Right cardiac atrium (tissue), 5 donors: ENCODE measurements at regions of chr17 and their contacts with region 1.

Region 1: DNA sequence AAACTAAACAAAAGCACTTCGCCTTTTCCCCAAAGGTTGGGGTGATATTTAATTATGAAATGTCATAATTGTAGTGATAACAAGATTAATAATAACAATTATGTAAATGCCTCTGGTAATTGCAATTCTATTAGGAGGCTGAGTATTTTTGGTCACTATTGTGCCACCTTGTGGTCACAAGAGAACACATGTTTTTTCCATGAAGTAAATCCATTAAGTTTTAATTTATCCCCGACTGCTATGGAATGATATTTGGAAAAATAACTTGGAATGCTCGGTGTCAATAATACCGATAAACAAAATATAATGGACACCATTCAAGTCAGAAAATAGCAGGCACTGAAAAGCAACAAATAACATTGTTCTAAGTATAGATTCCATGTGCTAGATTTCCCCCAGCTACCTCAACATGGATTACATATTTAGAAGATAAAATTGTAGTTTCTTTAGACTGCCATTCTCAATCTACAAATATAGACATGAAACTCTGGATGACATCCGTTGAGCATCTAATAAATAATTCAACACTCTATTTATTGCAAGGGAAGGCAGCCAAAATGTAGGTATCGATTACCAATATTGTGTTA is 25.0 kb upstream of the KCNJ2 start:
- DNase-seq: no peak
- ATAC-seq: no peak
- H3K4me3 ChIP-seq: no peak overlapping the region
- H3K27ac ChIP-seq: no peak overlapping the region
- H3K4me1 ChIP-seq: no peaks in the 10 kb centered on the region
- H3K27me3 ChIP-seq: no peaks in the 10 kb centered on the region

Region 2: GRCh38 chr17:69607162-69607834 is 537.1 kb before region 1 on chr17:
- intact Hi-C with region 1: loop called in 3 of 4 experiments (anchors 5 to 10 kb)
- DNase-seq: peak; percentile 76 to 91 (median 86)
- ATAC-seq: peak; percentile 93 to 94
- H3K4me3 ChIP-seq: no peak overlapping the region
- H3K27ac ChIP-seq: no peak overlapping the region
- H3K4me1 ChIP-seq: no peaks in the 10 kb centered on the region
- H3K27me3 ChIP-seq: no peaks in the 10 kb centered on the region

Region 3: GRCh38 chr17:70622368-70623260 is 478.3 kb after region 1 on chr17:
- intact Hi-C with region 1: loop called in 1 of 4 experiments (anchors 10 kb)
- DNase-seq: peak; percentile 21 to 67 (median 49)
- ATAC-seq: peak in 1 of 2 donors; percentile 55
- H3K4me3 ChIP-seq: no peak overlapping the region
- H3K27ac ChIP-seq: no peak overlapping the region
- H3K4me1 ChIP-seq: no peaks in the 10 kb centered on the region
- H3K27me3 ChIP-seq: no peaks in the 10 kb centered on the region